ENCODE measurements at regions of chr22 and their contacts with region 1.

Region 1: GRCh38 chr22:25081409-25081824 is 118.2 kb upstream of the CRYBB3 start:
- DNase-seq: peak; percentile 68
- ATAC-seq: peak; percentile 68
- H3K4me3 Mint-ChIP-seq: no peak overlapping the region
- H3K27ac Mint-ChIP-seq: no peak overlapping the region
- H3K4me1 Mint-ChIP-seq: no peaks in the 10 kb centered on the region
- H3K27me3 Mint-ChIP-seq: no peaks in the 10 kb centered on the region; the same call in 1 of the 2 replicates
- CTCF ChIP-seq: no peak; the same call in 1 of the 2 replicates

Region 2: GRCh38 chr22:25057013-25057881 is 24.2 kb before region 1 on chr22:
- CTCF ChIA-PET with region 1: interaction called, 12 read pairs
- POLR2A ChIA-PET with region 1: no interaction called
- DNase-seq: peak; percentile 95
- ATAC-seq: peak; percentile 96
- H3K4me3 Mint-ChIP-seq: no peak overlapping the region
- H3K27ac Mint-ChIP-seq: peak overlapping the region; percentile 81; the same call in 1 of the 2 replicates
- H3K4me1 Mint-ChIP-seq: peaks cover 22% of the 10 kb centered on the region
- H3K27me3 Mint-ChIP-seq: no peaks in the 10 kb centered on the region
- CTCF ChIP-seq: peak; percentile 83

Region 3: GRCh38 chr22:25094579-25094978 is 13.2 kb after region 1 on chr22:
- CTCF ChIA-PET with region 1: interaction called, 10 read pairs
- POLR2A ChIA-PET with region 1: no interaction called
- DNase-seq: no peak
- ATAC-seq: no peak
- H3K4me3 Mint-ChIP-seq: no peak overlapping the region
- H3K27ac Mint-ChIP-seq: no peak overlapping the region
- H3K4me1 Mint-ChIP-seq: peaks cover 6% of the 10 kb centered on the region
- H3K27me3 Mint-ChIP-seq: no peaks in the 10 kb centered on the region
- CTCF ChIP-seq: no peak

Region 4: DNA sequence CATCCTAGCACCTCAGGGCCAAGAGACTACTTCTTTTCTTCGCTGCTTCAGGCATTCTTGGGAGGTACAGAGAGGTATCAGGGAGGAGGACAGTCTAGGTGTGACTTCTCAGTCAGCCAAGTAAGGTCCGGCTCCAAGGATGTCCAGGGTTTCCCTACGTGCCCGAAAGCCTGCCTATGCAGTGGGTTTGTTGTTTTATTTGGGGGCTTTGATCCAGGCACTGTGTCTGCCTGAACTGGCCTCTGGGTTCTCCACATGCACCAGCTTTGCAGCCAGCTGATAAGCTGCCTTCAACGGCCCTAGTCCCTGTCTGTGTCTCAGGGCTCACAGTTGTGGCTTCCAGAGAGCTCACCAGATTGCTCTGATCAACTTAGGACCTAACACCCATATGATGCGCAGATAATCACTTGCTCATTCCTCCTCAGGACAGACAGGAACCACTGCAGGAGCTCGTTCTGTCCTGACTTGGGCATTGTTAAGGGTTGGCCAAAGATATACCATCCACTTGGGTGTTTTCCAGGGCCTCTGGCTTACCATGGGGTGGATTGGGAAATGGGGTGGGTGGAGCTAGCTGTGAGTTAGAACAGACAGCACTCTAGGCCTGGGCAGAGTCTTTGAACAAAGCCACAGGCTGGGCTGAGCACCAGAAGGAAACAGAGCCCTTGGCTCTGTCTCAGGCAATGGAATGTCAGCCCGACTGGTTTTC is 72.7 kb after region 1 on chr22:
- CTCF ChIA-PET with region 1: interaction called, 13 read pairs
- POLR2A ChIA-PET with region 1: no interaction called
- DNase-seq: no peak
- ATAC-seq: peak; percentile 92
- H3K4me3 Mint-ChIP-seq: no peak overlapping the region
- H3K27ac Mint-ChIP-seq: peak overlapping the region; percentile 41
- H3K4me1 Mint-ChIP-seq: peaks cover 9% of the 10 kb centered on the region
- H3K27me3 Mint-ChIP-seq: no peaks in the 10 kb centered on the region
- CTCF ChIP-seq: no peak

Region 5: GRCh38 chr22:25179250-25179631 is 97.8 kb after region 1 on chr22:
- CTCF ChIA-PET with region 1: interaction called, 16 read pairs
- POLR2A ChIA-PET with region 1: no interaction called
- DNase-seq: peak; percentile 56
- ATAC-seq: peak; percentile 84
- H3K4me3 Mint-ChIP-seq: no peak overlapping the region
- H3K27ac Mint-ChIP-seq: no peak overlapping the region
- H3K4me1 Mint-ChIP-seq: peaks cover 7% of the 10 kb centered on the region
- H3K27me3 Mint-ChIP-seq: no peaks in the 10 kb centered on the region
- CTCF ChIP-seq: no peak

Region 6: DNA sequence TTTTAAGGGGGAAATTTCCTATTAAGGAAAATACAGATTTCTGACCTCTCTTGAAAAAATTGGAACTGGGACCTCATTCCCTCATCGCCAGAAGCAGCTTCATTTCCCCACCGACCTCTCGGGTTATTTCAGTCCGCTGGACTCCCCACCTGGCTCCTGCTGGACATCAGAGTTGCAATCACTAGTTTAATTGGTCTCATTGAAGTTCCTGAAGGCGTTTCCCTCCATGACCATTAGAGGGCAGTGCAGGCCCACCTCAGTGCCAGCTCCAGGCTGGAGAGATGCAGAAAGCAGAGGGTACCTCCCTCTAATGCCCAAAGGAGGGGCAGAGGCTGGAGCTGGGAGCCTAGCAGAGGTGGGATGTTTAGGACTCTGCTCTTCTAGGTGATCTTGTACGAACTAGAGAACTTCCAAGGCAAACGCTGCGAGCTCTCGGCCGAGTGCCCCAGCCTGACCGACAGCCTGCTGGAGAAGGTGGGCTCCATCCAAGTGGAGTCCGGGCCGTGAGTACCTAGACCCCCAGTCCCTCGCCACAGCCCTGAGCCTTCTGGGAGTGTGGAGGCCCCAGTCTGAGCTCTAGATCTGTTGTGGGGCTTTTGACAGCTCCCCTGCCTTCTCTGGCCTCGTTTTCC is 121.0 kb after region 1 on chr22:
- CTCF ChIA-PET with region 1: interaction called, 18 read pairs
- POLR2A ChIA-PET with region 1: no interaction called
- DNase-seq: peak; percentile 86
- ATAC-seq: peak; percentile 94
- H3K4me3 Mint-ChIP-seq: no peak overlapping the region
- H3K27ac Mint-ChIP-seq: no peak overlapping the region
- H3K4me1 Mint-ChIP-seq: no peaks in the 10 kb centered on the region
- H3K27me3 Mint-ChIP-seq: no peaks in the 10 kb centered on the region
- CTCF ChIP-seq: peak; percentile 76

Measured in WTC11 (cell line).